CD8-positive, alpha-beta T cell (primary cell): ENCODE measurements at regions of chr1 and their contacts with region 1.

Region 1: DNA sequence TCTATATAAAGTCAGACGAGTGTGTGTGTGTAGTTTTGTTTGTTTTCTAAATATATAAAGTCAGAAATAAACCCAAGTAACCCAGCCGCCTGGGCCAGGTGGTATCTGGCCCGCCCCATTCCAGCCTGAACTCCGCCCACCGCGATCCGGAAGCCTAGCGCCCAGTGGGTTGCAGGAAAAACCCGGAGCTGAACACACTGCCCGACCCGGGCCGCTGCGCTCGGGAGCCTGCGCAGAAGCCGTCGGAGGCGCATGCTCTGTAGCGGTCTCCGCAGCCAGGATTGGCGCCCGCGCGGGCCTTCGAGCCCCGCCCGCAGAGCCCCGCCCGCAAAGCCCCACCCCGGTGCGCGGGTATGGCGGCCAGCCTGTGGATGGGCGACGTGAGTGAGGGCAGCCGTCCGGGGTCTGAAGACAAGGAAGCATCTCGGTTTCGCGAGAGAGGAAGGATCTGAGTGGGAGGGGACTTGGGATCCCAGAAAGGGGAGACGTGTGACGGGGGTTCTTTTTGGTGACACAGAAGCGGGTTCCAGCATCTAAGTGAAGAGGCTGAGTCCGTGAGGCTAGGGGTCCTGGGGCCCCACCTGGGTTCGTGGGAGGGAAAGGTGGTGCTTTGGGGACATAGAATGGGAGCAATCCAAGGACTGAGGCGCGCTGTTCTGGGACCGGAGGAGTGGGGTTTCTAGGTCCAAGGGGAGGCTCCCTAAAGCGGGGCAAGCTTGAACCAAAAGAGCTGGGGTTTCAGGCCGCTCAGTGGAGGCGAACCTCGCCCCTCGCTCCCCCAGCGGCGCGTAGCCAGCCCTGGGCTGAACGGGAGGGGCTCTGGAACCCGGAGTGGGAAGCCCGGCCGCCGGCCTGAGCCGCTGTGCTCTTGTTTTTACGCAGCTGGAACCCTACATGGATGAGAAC is at the start of gene TRNAU1AP:
- DNase-seq: peak; percentile 95 to 98 (median 97)
- ATAC-seq: peak; percentile 96
- H3K4me3 ChIP-seq: peak within 1 kb of the TSS; percentile 91 to 98
- H3K4me3 Mint-ChIP-seq: peak within 1 kb of the TSS; percentile 99
- H3K27ac ChIP-seq: peak within 1 kb of the TSS; percentile 77 to 86
- H3K27ac Mint-ChIP-seq: peak within 1 kb of the TSS; percentile 99
- H3K4me1 ChIP-seq: peaks cover 15% of the 10 kb centered on the region
- H3K4me1 Mint-ChIP-seq: peaks cover 24% of the 10 kb centered on the region
- H3K27me3 ChIP-seq: no peaks in the 10 kb centered on the region
- H3K27me3 Mint-ChIP-seq: no peaks in the 10 kb centered on the region
- CTCF ChIP-seq: no peak
- total RNA-seq, gene TRNAU1AP: 20.5 to 25.7 TPM

Region 2: GRCh38 chr1:27341525-27342252 is 1211.3 kb before region 1 on chr1 and contains the start of gene SYTL1:
- CTCF ChIA-PET with region 1: no interaction called
- POLR2A ChIA-PET with region 1: no interaction called
- intact Hi-C with region 1: loop called (anchors 2 to 10 kb)
- DNase-seq: peak; percentile 38 to 84 (median 72)
- ATAC-seq: peak; percentile 64
- H3K4me3 ChIP-seq: peak within 1 kb of the TSS; percentile 85 to 91
- H3K4me3 Mint-ChIP-seq: peak within 1 kb of the TSS; percentile 97
- H3K27ac ChIP-seq: peak within 1 kb of the TSS; percentile 69 to 86
- H3K27ac Mint-ChIP-seq: peak within 1 kb of the TSS; percentile 93
- H3K4me1 ChIP-seq: peaks cover 38% of the 10 kb centered on the region
- H3K4me1 Mint-ChIP-seq: peaks cover 55% of the 10 kb centered on the region
- H3K27me3 ChIP-seq: no peaks in the 10 kb centered on the region
- H3K27me3 Mint-ChIP-seq: no peaks in the 10 kb centered on the region
- CTCF ChIP-seq: no peak
- total RNA-seq, gene SYTL1: 103 to 113 TPM

Region 3: GRCh38 chr1:27671964-27672749 is 880.9 kb before region 1 on chr1 and contains the start of gene IFI6:
- CTCF ChIA-PET with region 1: no interaction called
- POLR2A ChIA-PET with region 1: no interaction called
- intact Hi-C with region 1: no loop called
- DNase-seq: peak; percentile 47 to 94 (median 80)
- ATAC-seq: peak; percentile 92
- H3K4me3 ChIP-seq: peak within 1 kb of the TSS; percentile 48 to 71
- H3K4me3 Mint-ChIP-seq: peak within 1 kb of the TSS; percentile 92
- H3K27ac ChIP-seq: peak within 1 kb of the TSS; percentile 62 to 87
- H3K27ac Mint-ChIP-seq: peak within 1 kb of the TSS; percentile 98
- H3K4me1 ChIP-seq: peaks cover 35% of the 10 kb centered on the region
- H3K4me1 Mint-ChIP-seq: peaks cover 42% of the 10 kb centered on the region
- H3K27me3 ChIP-seq: no peaks in the 10 kb centered on the region
- H3K27me3 Mint-ChIP-seq: no peaks in the 10 kb centered on the region
- CTCF ChIP-seq: peak; percentile 28
- total RNA-seq, gene IFI6: 24.8 to 25.1 TPM

Region 4: DNA sequence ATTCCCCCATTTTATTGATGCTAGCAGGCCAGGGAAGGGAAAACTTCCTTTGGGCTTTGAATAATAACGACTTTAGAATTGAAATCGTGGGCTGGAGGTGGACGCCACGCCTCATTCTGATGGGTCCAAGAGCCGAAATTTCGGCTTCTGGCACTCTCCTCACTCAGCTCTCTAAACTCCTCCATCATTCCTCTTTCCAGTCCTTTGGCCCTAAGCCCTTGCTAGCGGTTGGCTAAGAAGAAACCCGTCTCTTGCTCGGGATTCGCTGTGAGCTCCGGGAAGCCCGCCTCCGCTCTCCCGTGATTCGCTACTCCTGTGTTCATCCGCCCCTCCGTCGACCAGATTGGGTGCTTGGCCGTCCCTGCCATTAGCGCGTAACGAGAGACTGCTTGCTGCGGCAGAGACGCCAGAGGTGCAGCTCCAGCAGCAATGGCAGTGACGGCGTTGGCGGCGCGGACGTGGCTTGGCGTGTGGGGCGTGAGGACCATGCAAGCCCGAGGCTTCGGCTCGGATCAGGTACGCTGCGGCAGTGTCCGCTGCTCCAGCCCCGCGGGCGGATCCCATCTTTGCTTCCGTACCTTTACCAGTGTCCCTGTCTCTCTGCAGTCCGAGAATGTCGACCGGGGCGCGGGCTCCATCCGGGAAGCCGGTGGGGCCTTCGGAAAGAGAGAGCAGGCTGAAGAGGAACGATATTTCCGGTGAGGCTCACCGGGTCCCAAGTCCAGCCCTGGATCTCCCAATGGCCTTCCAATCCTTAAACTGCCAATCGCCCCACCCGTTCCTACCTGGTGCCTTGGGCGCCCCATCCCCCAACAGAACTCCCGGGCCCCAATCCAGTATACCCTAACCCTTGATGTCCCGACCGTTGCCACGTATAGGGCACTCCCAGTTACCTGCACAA is 317.0 kb before region 1 on chr1 and contains the start of gene ATP5IF1:
- CTCF ChIA-PET with region 1: no interaction called
- POLR2A ChIA-PET with region 1: no interaction called
- intact Hi-C with region 1: loop called (anchors 2 kb)
- DNase-seq: peak; percentile 90 to 98 (median 94)
- ATAC-seq: peak; percentile 95
- H3K4me3 ChIP-seq: peak within 1 kb of the TSS; percentile 80 to 96
- H3K4me3 Mint-ChIP-seq: no peak within 1 kb of the TSS
- H3K27ac ChIP-seq: peak within 1 kb of the TSS; percentile 84 to 96
- H3K27ac Mint-ChIP-seq: no peak within 1 kb of the TSS
- H3K4me1 ChIP-seq: peaks cover 41% of the 10 kb centered on the region
- H3K4me1 Mint-ChIP-seq: peaks cover 21% of the 10 kb centered on the region
- H3K27me3 ChIP-seq: no peaks in the 10 kb centered on the region
- H3K27me3 Mint-ChIP-seq: no peaks in the 10 kb centered on the region
- CTCF ChIP-seq: no peak
- total RNA-seq, gene ATP5IF1: 66.1 to 69.3 TPM

Region 5: GRCh38 chr1:28518000-28518744 is 34.8 kb before region 1 on chr1:
- CTCF ChIA-PET with region 1: interaction called, 10 read pairs
- POLR2A ChIA-PET with region 1: no interaction called
- intact Hi-C with region 1: loop called (anchors 1 kb)
- DNase-seq: peak; percentile 76 to 93 (median 88)
- ATAC-seq: peak; percentile 91
- H3K4me3 ChIP-seq: peak overlapping the region; percentile 59 to 79
- H3K4me3 Mint-ChIP-seq: peak overlapping the region; percentile 89
- H3K27ac ChIP-seq: peak overlapping the region; percentile 55 to 57
- H3K27ac Mint-ChIP-seq: peak overlapping the region; percentile 84
- H3K4me1 ChIP-seq: peaks cover 21% of the 10 kb centered on the region
- H3K4me1 Mint-ChIP-seq: peaks cover 28% of the 10 kb centered on the region
- H3K27me3 ChIP-seq: no peaks in the 10 kb centered on the region
- H3K27me3 Mint-ChIP-seq: no peaks in the 10 kb centered on the region
- CTCF ChIP-seq: peak; percentile 98

Region 6: GRCh38 chr1:28648474-28649198 is 95.6 kb after region 1 on chr1 and contains the start of gene RNU11:
- CTCF ChIA-PET with region 1: no interaction called
- POLR2A ChIA-PET with region 1: interaction called, 3 read pairs
- intact Hi-C with region 1: loop called in 1 of 2 experiments (anchors 1 kb)
- DNase-seq: peak; percentile 76 to 97 (median 87)
- ATAC-seq: peak; percentile 65
- H3K4me3 ChIP-seq: peak within 1 kb of the TSS; percentile 41 to 65
- H3K4me3 Mint-ChIP-seq: peak within 1 kb of the TSS; percentile 80
- H3K27ac ChIP-seq: peak within 1 kb of the TSS; percentile 96 to 98
- H3K27ac Mint-ChIP-seq: peak within 1 kb of the TSS; percentile 99
- H3K4me1 ChIP-seq: peaks cover 30% of the 10 kb centered on the region
- H3K4me1 Mint-ChIP-seq: peaks cover 32% of the 10 kb centered on the region
- H3K27me3 ChIP-seq: no peaks in the 10 kb centered on the region
- H3K27me3 Mint-ChIP-seq: no peaks in the 10 kb centered on the region
- CTCF ChIP-seq: no peak
- total RNA-seq, gene RNU11: not detected

Region 7: GRCh38 chr1:28668191-28668955 is 115.4 kb after region 1 on chr1 and contains the start of gene GMEB1:
- CTCF ChIA-PET with region 1: no interaction called
- POLR2A ChIA-PET with region 1: interaction called, 3 read pairs
- intact Hi-C with region 1: loop called in 1 of 2 experiments (anchors 2 kb)
- DNase-seq: peak; percentile 66 to 91 (median 82)
- ATAC-seq: peak; percentile 61
- H3K4me3 ChIP-seq: peak within 1 kb of the TSS; percentile 83 to 98
- H3K4me3 Mint-ChIP-seq: peak within 1 kb of the TSS; percentile 92
- H3K27ac ChIP-seq: peak within 1 kb of the TSS; percentile 81 to 98
- H3K27ac Mint-ChIP-seq: peak within 1 kb of the TSS; percentile 97
- H3K4me1 ChIP-seq: peaks cover 9% of the 10 kb centered on the region
- H3K4me1 Mint-ChIP-seq: peaks cover 22% of the 10 kb centered on the region
- H3K27me3 ChIP-seq: no peaks in the 10 kb centered on the region
- H3K27me3 Mint-ChIP-seq: no peaks in the 10 kb centered on the region
- CTCF ChIP-seq: no peak
- total RNA-seq, gene GMEB1: 12.9 to 13.6 TPM